ENCODE measurements at regions of chr11 and their contacts with region 1.

Region 1: DNA sequence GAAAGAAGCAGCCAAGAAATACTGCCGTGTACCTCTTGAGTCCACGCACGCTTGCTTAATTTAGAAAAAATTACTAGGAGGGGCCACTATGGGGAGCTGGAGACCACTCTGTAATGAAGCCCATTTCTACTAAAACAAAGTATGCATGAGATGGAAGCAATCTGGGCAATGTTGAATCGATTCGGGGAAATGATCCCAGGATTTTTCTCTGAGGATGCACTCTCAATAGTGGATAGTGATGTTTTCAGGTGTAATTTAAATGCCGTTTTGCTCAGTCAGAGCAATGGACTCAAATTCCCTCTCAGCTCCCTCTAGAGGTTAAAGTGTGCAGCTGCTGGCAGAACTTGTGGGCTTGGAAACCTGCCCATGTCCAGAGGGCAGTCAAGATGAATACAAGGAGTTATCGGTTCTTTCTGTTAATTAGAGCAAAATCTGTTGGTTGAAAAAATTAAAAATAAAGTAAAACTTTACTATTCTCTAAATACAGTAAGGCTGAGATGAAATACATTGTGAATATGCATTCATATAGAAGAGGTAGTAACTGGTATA is 64.1 kb downstream of the ME3 start:
- DNase-seq: peak; percentile 47 to 84
- ATAC-seq: peak; percentile 82 to 87
- H3K4me3 ChIP-seq: no peak overlapping the region
- H3K27ac ChIP-seq: peak overlapping the region; percentile 61 to 77
- H3K4me1 ChIP-seq: peaks cover 37% of the 10 kb centered on the region
- CTCF ChIP-seq: peak; percentile 99
- EP300 ChIP-seq: no peak; a peak in 1 of 5 replicates
- POLR2A ChIP-seq: no peak
- RAD21 ChIP-seq: peak; percentile 79 to 95

Region 2: DNA sequence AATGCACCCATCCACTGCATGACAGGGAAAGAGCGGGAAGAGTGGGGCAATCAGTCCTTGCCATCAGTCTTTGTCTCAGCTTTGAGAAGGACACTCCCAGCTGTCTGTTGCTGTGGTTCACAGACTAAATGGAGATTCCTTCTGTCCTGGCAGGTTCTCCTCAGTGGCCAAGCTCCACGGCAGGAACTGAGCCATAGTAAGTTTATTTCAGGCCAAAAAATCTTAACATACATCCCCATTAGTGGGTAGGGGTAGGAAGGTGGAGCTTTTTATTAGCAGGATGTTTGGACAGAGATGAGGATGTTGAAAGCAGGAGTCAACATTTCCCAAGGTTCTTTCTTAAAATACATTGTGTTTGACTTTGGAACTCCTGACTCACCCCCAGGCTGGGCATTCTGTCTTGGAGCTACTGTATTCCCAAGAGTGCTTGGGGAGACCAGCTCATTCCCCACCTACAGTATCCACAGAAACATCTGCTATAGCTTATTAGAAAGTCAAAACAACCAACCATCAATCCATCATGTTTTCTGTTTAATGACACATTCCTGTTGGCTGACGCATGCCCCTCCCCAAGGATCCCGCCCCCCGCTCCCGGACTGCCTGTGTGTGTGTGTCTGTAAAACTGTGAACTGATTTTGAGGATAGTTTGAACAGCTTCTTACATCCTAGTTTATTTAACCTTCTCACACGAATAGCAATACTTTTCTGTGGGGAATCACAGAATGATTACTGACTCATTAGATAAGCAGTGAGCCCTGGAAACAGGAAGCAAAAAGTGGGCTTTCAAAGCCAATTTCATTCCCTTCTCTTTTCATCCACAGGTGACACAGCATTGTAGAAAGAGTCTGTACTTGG is 124.2 kb before region 1 on chr11:
- CTCF ChIA-PET with region 1: interaction called, 28 read pairs
- POLR2A ChIA-PET with region 1: no interaction called
- DNase-seq: peak; percentile 91 to 97
- ATAC-seq: peak; percentile 95
- H3K4me3 ChIP-seq: no peak overlapping the region
- H3K27ac ChIP-seq: peak overlapping the region; percentile 77 to 89
- H3K4me1 ChIP-seq: peaks cover 60% of the 10 kb centered on the region
- CTCF ChIP-seq: no peak
- EP300 ChIP-seq: peak; percentile 94 to 96; a peak in 4 of 5 replicates
- POLR2A ChIP-seq: no peak
- RAD21 ChIP-seq: peak; percentile 19 to 61

Region 3: GRCh38 chr11:86587264-86588193 is 20.8 kb before region 1 on chr11:
- CTCF ChIA-PET with region 1: interaction called, 34 read pairs
- POLR2A ChIA-PET with region 1: no interaction called
- DNase-seq: no peak
- ATAC-seq: no peak
- H3K4me3 ChIP-seq: no peak overlapping the region
- H3K27ac ChIP-seq: peak overlapping the region in 1 of 2 experiments; percentile 90; a peak in 3 of 6 replicates
- H3K4me1 ChIP-seq: peaks cover 29% of the 10 kb centered on the region
- CTCF ChIP-seq: no peak
- EP300 ChIP-seq: no peak
- POLR2A ChIP-seq: no peak
- RAD21 ChIP-seq: no peak

Region 4: DNA sequence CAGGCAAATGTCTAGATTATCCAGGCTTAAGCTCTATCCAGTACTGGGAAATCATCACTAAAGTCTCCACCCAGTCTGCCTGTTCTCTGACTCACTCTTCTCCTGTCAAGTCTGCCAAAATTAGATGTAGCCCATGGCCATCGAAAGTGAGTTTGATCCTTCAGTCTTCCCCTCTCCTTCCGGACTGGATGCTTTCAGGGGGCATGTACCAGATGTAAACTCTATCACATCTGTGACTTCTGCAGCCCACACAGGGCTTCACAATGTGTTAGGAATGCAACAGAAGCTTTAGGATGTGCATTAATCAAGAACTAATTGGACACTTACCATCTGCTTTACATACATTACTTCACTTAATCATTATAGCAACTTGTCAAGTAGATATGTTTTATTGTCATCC is 51.8 kb after region 1 on chr11:
- CTCF ChIA-PET with region 1: interaction called, 12 read pairs
- POLR2A ChIA-PET with region 1: no interaction called
- DNase-seq: no peak
- ATAC-seq: peak; percentile 66 to 81; a peak in 5 of 6 replicates
- H3K4me3 ChIP-seq: no peak overlapping the region
- H3K27ac ChIP-seq: no peak overlapping the region
- H3K4me1 ChIP-seq: peaks cover 17% of the 10 kb centered on the region
- CTCF ChIP-seq: no peak
- EP300 ChIP-seq: no peak
- POLR2A ChIP-seq: no peak
- RAD21 ChIP-seq: no peak

Region 5: GRCh38 chr11:86795890-86796289 is 187.6 kb after region 1 on chr11:
- CTCF ChIA-PET with region 1: interaction called, 44 read pairs
- POLR2A ChIA-PET with region 1: interaction called, 5 read pairs
- DNase-seq: peak in 1 of 2 experiments; percentile 91
- ATAC-seq: peak in 1 of 2 experiments; percentile 11; a peak in 2 of 6 replicates
- H3K4me3 ChIP-seq: no peak overlapping the region
- H3K27ac ChIP-seq: peak overlapping the region; percentile 53 to 96
- H3K4me1 ChIP-seq: peaks cover 39% of the 10 kb centered on the region
- CTCF ChIP-seq: no peak
- EP300 ChIP-seq: peak; percentile 70 to 81; a peak in 3 of 5 replicates
- POLR2A ChIP-seq: no peak
- RAD21 ChIP-seq: no peak

Measured in A549 (cell line).